Panc1 (cell line): ENCODE measurements at regions of chr12 and their contacts with region 1.

Region 1: DNA sequence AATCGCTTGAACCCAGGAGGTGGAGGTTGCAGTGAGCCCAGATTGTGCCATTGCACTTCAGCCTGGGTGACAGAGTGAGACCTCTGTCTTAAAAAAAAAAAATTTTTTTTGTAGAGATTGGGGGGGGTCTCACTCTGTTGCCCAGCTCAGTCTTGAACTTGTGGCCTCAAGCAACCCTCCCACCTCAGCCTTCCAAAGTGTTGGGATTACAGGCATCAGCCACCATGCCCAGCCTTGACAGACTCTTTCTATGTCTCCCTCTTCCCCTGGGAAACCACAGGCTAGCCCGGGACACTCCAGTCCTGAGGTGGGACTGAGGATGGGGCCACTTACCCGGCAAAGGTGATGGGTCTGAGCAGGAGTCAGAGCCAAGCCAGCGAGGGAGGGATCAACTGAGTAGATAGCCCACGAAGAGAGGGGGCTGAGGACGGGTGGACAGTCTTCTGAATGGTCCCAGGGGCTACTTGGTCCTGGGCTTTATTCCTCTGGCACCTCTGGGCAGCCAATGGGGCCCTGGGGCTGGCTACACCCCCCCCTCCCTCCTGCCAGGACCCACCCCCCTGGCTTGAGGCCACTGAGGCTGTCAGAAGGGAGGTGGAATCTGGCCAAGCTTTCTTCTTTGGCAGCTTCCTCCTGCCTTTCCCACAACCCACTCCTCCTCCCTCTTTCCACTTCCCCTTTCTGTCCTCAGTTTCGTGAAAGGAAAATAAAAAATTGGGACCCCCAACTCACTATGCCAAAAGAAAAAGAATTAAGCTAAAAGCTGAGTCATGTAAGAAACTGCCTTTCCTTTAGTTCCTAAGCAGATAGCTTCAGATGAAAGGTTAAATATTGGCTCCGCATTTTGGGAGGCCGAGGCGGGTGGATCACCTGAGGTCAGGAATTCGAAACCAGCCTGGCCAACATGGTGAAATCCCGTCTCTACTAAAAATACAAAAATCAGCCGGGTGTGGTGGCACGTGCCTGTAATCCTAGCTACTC is at the start of gene SDS:
- DNase-seq: no peak
- ATAC-seq: peak; percentile 46; the same call in 1 of the 2 replicates
- H3K4me3 ChIP-seq: no peak within 1 kb of the TSS
- H3K27ac ChIP-seq: no peak within 1 kb of the TSS
- H3K4me1 ChIP-seq: no peaks in the 10 kb centered on the region
- H3K27me3 ChIP-seq: no peaks in the 10 kb centered on the region
- CTCF ChIP-seq: no peak
- total RNA-seq, gene SDS: 0.15 TPM

Region 2: DNA sequence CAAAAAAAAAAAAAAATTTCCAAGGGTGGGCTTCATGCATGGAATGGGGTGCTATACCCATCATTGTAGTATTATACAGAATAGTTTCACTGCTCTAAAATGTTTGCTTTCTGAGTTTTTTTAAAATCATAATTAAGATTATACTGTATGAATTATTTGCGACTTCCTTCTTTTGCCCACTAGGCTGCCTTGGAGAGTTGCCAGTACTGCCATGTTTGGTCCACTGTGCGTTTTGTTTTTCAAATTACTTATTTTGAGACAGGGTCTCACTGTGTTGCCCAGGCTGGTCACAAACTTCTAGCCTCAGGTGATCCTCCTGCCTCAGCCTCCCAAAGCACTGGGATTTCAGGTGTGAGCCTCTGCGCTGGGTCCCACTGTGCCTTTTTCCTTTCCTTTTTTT is 25.4 kb before region 1 on chr12:
- CTCF ChIA-PET with region 1: no interaction called
- POLR2A ChIA-PET with region 1: interaction called, 21 read pairs
- in situ Hi-C with region 1: no loop called
- intact Hi-C with region 1: no loop called
- DNase-seq: no peak
- ATAC-seq: no peak
- H3K4me3 ChIP-seq: no peak overlapping the region
- H3K27ac ChIP-seq: no peak overlapping the region
- H3K4me1 ChIP-seq: no peaks in the 10 kb centered on the region
- H3K27me3 ChIP-seq: no peaks in the 10 kb centered on the region
- CTCF ChIP-seq: no peak